ENCODE measurements at regions of chr12 and their contacts with region 1.

Region 1: GRCh38 chr12:101939856-101940265 is 62.5 kb downstream of the DRAM1 start:
- DNase-seq: peak; percentile 44
- H3K4me3 ChIP-seq: no peak overlapping the region
- H3K27ac ChIP-seq: no peak overlapping the region
- H3K4me1 ChIP-seq: peaks cover 23% of the 10 kb centered on the region
- H3K27me3 ChIP-seq: no peaks in the 10 kb centered on the region
- CTCF ChIP-seq: peak; percentile 63 to 80

Region 2: GRCh38 chr12:101773650-101774162 is 166.2 kb before region 1 on chr12:
- CTCF ChIA-PET with region 1: interaction called, 3 read pairs
- dilution Hi-C with region 1: no loop called
- in situ Hi-C with region 1: no loop called
- intact Hi-C with region 1: loop called (anchors 5 kb)
- DNase-seq: peak; percentile 57
- H3K4me3 ChIP-seq: no peak overlapping the region
- H3K27ac ChIP-seq: no peak overlapping the region
- H3K4me1 ChIP-seq: no peaks in the 10 kb centered on the region
- H3K27me3 ChIP-seq: no peaks in the 10 kb centered on the region
- CTCF ChIP-seq: peak; percentile 83 to 96

Region 3: DNA sequence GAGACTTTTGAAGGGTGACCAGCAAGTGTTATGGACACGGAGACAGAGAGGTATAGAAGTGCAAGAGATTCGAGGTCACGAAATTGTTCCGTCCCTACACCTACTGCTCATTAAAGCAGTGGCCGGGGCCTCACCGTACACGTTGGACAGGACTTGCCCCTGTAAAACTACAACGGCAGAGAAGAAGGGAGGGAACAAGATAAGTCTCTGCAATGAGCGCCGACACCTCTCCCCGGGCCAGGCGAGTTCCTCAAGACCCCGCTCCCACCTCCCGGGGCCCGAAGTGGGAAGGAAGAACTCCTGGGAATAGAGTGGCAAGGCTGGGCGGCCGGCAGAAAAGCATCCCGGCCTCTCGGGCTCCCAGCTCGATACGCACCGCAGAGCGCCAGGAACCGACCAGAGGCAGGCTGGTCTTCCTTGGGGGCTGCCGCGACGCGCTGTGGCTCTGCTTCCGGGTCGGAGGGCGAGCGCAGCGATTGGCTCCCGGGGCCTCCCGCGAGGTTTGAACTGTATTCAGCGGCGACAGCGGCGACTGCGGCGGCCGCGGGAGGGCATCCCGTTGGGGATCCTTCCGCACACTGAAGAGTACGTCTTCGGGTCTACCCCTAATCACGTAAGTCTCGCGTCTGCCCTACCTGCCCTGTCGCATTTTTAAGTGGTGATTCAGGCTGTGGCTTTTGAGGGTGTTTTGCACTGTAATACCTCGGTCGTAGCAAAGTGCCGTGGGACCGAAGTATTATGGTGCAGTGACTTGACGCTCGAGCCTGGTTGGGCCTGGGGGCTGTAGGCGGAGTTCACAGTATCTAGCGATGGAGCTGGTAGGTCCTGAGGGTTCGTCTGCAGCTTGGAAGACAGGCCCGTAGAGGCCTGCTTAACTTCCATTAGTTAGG is 180.1 kb after region 1 on chr12 and contains the starts of genes NUP37 and PARPBP:
- CTCF ChIA-PET with region 1: no interaction called
- dilution Hi-C with region 1: no loop called
- in situ Hi-C with region 1: no loop called
- intact Hi-C with region 1: loop called (anchors 10 kb)
- DNase-seq: peak; percentile 93
- H3K4me3 ChIP-seq: peak within 1 kb of the TSS; percentile 76 to 91 (median 85)
- H3K27ac ChIP-seq: peak within 1 kb of the TSS; percentile 94
- H3K4me1 ChIP-seq: peaks cover 14% of the 10 kb centered on the region
- H3K27me3 ChIP-seq: no peaks in the 10 kb centered on the region
- CTCF ChIP-seq: peak in 1 of 2 donors; percentile 29
- total RNA-seq, gene NUP37: 18.8 to 47.4 TPM
- total RNA-seq, gene PARPBP: 3.8 to 10.2 TPM

Region 4: DNA sequence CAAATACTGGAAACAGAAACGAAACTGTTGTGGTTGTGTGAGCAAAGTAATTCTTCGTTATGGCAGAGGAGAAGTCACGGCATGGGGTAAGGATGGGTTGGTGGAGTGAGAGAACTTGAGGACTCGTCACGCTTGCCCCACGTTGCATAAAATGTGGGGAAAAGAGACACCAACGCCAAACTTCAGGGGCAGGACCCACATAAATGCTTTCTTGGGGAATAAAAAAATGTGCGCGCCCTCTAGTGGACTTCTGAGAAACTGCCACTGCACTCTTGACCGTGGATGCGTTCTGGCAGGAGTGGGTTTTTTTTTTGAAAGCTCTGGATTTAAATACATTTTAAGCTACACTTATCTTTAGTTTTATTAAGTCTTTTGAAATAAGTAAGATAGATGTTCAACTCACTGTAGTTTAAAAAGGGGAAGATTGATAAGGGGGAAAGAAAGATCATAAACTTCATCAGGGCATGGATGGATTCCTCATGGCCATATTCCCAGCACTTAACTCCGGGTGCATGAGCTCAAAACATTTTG is 544.6 kb after region 1 on chr12:
- CTCF ChIA-PET with region 1: no interaction called
- dilution Hi-C with region 1: no loop called
- in situ Hi-C with region 1: loop called in 1 of 2 experiments (anchors 25 kb)
- intact Hi-C with region 1: loop called (anchors 1 kb)
- DNase-seq: peak; percentile 16
- H3K4me3 ChIP-seq: no peak overlapping the region
- H3K27ac ChIP-seq: no peak overlapping the region
- H3K4me1 ChIP-seq: no peaks in the 10 kb centered on the region
- H3K27me3 ChIP-seq: no peaks in the 10 kb centered on the region
- CTCF ChIP-seq: peak; percentile 82 to 83

Region 5: GRCh38 chr12:102740141-102740955 is 800.5 kb after region 1 on chr12:
- CTCF ChIA-PET with region 1: no interaction called
- dilution Hi-C with region 1: no loop called
- in situ Hi-C with region 1: no loop called
- intact Hi-C with region 1: loop called (anchors 2 kb)
- DNase-seq: peak; percentile 1
- H3K4me3 ChIP-seq: no peak overlapping the region
- H3K27ac ChIP-seq: no peak overlapping the region
- H3K4me1 ChIP-seq: no peaks in the 10 kb centered on the region
- H3K27me3 ChIP-seq: no peaks in the 10 kb centered on the region
- CTCF ChIP-seq: peak in 1 of 2 donors; percentile 22

Region 6: GRCh38 chr12:102879144-102879763 is 939.4 kb after region 1 on chr12:
- CTCF ChIA-PET with region 1: no interaction called
- dilution Hi-C with region 1: no loop called
- in situ Hi-C with region 1: no loop called
- intact Hi-C with region 1: loop called (anchors 10 kb)
- DNase-seq: peak; percentile 79
- H3K4me3 ChIP-seq: no peak overlapping the region
- H3K27ac ChIP-seq: no peak overlapping the region
- H3K4me1 ChIP-seq: no peaks in the 10 kb centered on the region
- H3K27me3 ChIP-seq: peaks cover 2% of the 10 kb centered on the region
- CTCF ChIP-seq: peak; percentile 46 to 57

Measured in mammary epithelial cell (primary cell).